ENCODE measurements at regions of chr14 and their contacts with region 1.

Region 1: DNA sequence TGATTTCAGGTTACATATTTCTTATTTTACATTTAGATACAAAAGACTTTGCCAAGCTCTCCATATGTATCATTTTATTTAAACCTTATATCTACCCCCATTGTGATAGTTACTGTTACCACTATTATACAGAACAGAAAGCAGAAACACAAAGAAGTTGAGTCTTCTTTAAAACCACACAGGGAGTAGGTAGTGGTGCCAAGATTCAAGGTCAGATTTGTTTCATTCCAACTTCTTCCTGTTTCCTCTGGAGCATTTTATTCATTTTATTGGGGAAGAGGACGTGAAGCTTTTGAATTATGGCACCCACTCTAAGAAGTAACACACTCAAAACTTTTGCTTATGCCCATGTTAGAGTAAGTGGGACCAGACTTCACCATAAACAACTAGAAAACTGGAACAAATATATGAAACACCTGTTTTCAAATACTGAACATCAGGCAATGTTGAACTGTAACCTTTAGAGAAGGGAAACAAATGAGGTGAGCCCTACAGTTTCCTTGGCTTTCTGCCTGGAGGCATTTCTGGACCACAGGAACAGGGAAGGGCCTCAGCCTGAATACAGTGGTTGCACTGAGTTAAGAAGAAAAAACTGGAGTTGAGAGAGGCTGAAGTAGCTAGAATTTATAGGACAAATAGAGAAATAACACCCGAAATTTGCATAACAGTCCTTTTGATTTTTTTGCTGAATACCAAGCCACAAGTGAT is 160.4 kb upstream of the SSTR1 start:
- DNase-seq: no peak
- ATAC-seq: no peak
- H3K4me3 ChIP-seq: no peak overlapping the region
- H3K4me3 Mint-ChIP-seq: no peak overlapping the region
- H3K27ac ChIP-seq: no peak overlapping the region
- H3K27ac Mint-ChIP-seq: no peak overlapping the region
- H3K4me1 ChIP-seq: peaks cover 5% of the 10 kb centered on the region
- H3K4me1 Mint-ChIP-seq: no peaks in the 10 kb centered on the region
- H3K27me3 ChIP-seq: no peaks in the 10 kb centered on the region
- H3K27me3 Mint-ChIP-seq: no peaks in the 10 kb centered on the region
- CTCF ChIP-seq: no peak

Region 2: GRCh38 chr14:38079886-38080285 is 32.5 kb after region 1 on chr14:
- CTCF ChIA-PET with region 1: no interaction called
- POLR2A ChIA-PET with region 1: no interaction called
- intact Hi-C with region 1: loop called in 1 of 2 experiments (anchors 5 kb)
- DNase-seq: no peak
- ATAC-seq: no peak
- H3K4me3 ChIP-seq: no peak overlapping the region
- H3K4me3 Mint-ChIP-seq: no peak overlapping the region
- H3K27ac ChIP-seq: no peak overlapping the region
- H3K27ac Mint-ChIP-seq: no peak overlapping the region
- H3K4me1 ChIP-seq: peaks cover 24% of the 10 kb centered on the region
- H3K4me1 Mint-ChIP-seq: peaks cover 45% of the 10 kb centered on the region
- H3K27me3 ChIP-seq: no peaks in the 10 kb centered on the region
- H3K27me3 Mint-ChIP-seq: no peaks in the 10 kb centered on the region
- CTCF ChIP-seq: no peak

Measured in CD4-positive, alpha-beta T cell (primary cell).